ENCODE measurements at regions of chr17 and their contacts with region 1.

Region 1: GRCh38 chr17:45098869-45099616 is 33.3 kb downstream of the PLCD3 start:
- DNase-seq: peak; percentile 85
- H3K4me3 Mint-ChIP-seq: no peak overlapping the region
- H3K27ac Mint-ChIP-seq: peak overlapping the region; percentile 86
- H3K4me1 Mint-ChIP-seq: peaks cover 33% of the 10 kb centered on the region
- H3K27me3 Mint-ChIP-seq: no peaks in the 10 kb centered on the region
- CTCF ChIP-seq: peak; percentile 93

Region 2: DNA sequence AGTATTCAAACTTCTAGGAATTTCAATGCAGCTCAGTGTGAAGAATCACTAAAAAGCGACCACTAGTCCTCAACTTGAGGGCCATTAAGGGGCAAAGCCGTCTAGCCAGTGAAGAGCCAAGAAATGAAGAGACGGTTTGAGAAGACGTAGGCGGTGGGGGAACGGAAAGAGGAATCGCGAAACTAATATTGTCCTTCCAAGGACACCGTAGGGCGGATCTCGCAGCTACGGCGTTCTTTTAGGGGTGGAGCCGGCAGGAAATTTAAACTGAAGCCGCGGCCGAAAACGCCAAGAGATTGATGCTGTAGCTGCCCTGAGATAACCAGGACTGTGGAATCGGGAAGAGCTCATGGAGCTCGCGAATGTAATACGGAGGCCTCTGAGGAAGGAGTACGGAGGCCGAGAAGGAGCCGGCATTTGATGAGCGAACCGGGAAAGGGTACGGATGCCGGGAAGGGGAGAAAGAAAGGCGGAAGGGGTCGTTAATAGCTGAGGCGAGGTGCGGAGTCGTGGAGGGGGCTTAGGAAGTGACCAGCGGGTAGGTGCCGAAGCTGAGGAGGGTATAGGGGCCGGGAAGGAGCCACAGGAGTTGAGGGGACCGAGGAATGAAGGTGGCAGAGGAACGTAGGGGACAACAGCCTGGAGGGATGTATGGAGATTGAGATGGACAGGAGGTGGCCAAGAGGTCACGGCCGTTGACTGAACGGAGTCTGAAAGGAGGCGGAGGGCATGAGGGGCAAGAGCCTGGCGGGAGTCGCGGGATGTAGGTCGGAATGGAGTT is 390.5 kb before region 1 on chr17 and contains the start of gene DBF4B:
- CTCF ChIA-PET with region 1: no interaction called
- POLR2A ChIA-PET with region 1: no interaction called
- intact Hi-C with region 1: no loop called
- DNase-seq: peak; percentile 88
- H3K4me3 Mint-ChIP-seq: no peak within 1 kb of the TSS
- H3K27ac Mint-ChIP-seq: no peak within 1 kb of the TSS
- H3K4me1 Mint-ChIP-seq: peaks cover 5% of the 10 kb centered on the region
- H3K27me3 Mint-ChIP-seq: no peaks in the 10 kb centered on the region
- CTCF ChIP-seq: no peak
- total RNA-seq, gene DBF4B: 13.9 TPM in 2 replicates

Region 3: DNA sequence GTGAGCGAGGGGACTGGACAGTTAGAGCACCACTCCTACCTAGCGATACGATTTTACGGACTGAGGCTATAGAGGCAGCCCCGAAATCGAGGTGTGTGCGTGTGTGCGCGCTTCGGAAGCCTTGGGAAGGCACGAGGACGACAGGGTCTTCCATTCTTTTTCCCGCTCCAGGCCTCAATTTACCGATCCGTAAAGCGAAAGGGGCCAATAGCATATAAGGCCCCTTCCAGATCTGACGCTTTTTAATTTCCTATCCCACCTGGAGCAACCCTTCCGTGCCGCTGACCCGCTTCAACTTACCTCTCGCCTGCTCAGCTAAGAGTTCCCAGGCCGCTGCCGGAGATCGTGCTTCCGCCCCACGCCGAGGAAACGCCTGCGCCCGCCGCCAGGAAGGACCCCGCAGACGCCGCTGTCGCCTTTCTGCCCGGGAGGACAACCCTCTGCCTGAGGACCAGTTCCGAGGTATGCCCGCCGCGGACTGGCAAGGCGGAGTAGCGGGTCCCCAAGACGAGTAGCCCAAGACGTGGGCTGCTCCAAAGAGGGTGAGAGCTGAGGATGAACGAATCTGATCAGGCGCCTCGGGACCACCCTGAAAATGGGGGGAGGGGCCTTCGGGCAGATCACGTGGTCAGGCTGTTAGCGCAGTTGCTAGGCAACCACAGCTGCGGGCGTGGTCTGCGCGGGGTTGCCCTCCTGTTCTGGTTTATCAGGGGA is 199.8 kb before region 1 on chr17 and contains the start of gene EFTUD2:
- CTCF ChIA-PET with region 1: interaction called, 10 read pairs
- POLR2A ChIA-PET with region 1: interaction called, 6 read pairs
- intact Hi-C with region 1: loop called (anchors 10 kb)
- DNase-seq: peak; percentile 87
- H3K4me3 Mint-ChIP-seq: peak within 1 kb of the TSS; percentile 80
- H3K27ac Mint-ChIP-seq: peak within 1 kb of the TSS; percentile 99
- H3K4me1 Mint-ChIP-seq: peaks cover 21% of the 10 kb centered on the region
- H3K27me3 Mint-ChIP-seq: no peaks in the 10 kb centered on the region
- CTCF ChIP-seq: no peak
- total RNA-seq, gene EFTUD2: 119 and 125 TPM in 2 replicates

Region 4: DNA sequence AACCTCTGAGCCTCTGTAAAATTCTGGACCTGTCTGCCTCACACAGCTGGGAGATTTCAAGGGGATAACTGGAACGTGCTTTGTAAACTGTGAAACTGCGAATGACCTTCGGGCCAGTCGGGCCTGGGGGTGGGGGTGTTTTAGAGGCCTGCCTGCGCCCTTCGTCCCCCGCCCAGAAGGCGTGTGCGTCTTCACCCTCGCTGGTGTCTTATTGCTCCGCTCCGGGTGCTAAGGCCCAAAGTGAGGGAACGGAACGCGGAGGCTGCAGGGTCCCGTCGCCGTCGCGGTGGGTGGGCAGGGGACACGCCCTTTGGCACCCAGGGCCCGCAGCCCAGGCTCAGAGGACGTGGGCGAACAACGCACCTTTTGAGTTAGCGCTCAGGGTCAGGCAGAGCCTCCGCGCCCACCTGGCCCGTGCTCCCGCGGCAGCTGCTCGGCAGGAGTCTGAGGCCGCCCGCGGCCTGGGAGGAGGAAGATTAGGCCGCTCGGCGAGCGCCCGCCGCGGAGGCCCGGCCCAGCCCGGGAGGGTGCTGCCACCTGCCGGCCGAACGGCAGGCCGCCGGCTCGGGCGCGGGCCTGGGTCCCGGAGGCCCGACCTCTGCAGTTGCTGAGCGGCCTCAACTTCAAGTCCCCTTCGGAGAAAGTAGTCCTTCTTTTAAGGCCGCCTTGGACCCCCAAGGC is 77.3 kb before region 1 on chr17:
- CTCF ChIA-PET with region 1: interaction called, 67 read pairs
- POLR2A ChIA-PET with region 1: interaction called, 4 read pairs
- intact Hi-C with region 1: loop called (anchors 1 kb)
- DNase-seq: peak; percentile 56
- H3K4me3 Mint-ChIP-seq: no peak overlapping the region
- H3K27ac Mint-ChIP-seq: no peak overlapping the region
- H3K4me1 Mint-ChIP-seq: peaks cover 18% of the 10 kb centered on the region
- H3K27me3 Mint-ChIP-seq: no peaks in the 10 kb centered on the region
- CTCF ChIP-seq: peak; percentile 80

Region 5: DNA sequence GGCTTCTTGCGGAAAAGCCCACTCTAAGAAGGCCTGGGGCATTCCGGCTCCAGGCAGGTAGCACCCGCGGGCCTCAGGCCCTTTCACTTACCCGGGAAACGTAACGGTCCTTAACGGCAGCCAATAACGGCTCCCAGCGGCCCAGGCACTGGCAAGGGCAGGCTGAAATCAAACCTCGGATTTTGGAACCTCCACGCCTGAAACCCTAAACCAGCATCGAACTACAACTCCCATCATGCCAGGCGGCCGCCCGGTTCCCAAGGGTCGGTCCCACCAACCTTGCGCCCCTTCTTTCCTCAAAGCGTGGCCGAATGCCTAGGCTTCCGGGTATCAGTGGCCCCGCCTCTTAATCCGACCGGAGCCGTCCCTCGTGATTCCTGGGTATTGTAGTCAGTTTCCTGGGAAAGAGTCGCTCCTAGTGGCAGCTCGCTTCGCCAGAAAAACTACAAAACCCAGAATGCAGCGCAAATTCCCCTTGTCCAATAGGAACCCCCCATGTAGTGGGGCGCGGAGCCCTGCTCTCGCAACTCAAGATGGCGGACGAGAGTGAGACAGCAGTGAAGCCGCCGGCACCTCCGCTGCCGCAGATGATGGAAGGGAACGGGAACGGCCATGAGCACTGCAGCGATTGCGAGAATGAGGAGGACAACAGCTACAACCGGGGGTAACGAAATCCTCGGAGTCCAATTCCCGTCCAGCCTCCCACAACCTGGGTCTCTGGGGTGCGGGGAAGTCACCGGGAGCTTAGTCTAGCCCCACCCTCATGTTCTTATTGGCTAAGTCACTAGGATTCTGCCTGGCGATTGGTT is 38.0 kb before region 1 on chr17 and contains the start of gene NMT1:
- CTCF ChIA-PET with region 1: interaction called, 8 read pairs
- POLR2A ChIA-PET with region 1: interaction called, 54 read pairs
- intact Hi-C with region 1: no loop called
- DNase-seq: peak; percentile 100
- H3K4me3 Mint-ChIP-seq: peak within 1 kb of the TSS; percentile 84
- H3K27ac Mint-ChIP-seq: peak within 1 kb of the TSS; percentile 94
- H3K4me1 Mint-ChIP-seq: peaks cover 5% of the 10 kb centered on the region
- H3K27me3 Mint-ChIP-seq: no peaks in the 10 kb centered on the region
- CTCF ChIP-seq: no peak
- total RNA-seq, gene NMT1: 85.3 and 89.7 TPM in 2 replicates

Region 6: GRCh38 chr17:45087504-45087975 is 11.5 kb before region 1 on chr17:
- CTCF ChIA-PET with region 1: interaction called, 17 read pairs
- POLR2A ChIA-PET with region 1: interaction called, 16 read pairs
- intact Hi-C with region 1: no loop called
- DNase-seq: no peak
- H3K4me3 Mint-ChIP-seq: no peak overlapping the region
- H3K27ac Mint-ChIP-seq: peak overlapping the region; percentile 12
- H3K4me1 Mint-ChIP-seq: peaks cover 8% of the 10 kb centered on the region
- H3K27me3 Mint-ChIP-seq: no peaks in the 10 kb centered on the region
- CTCF ChIP-seq: no peak

Region 7: DNA sequence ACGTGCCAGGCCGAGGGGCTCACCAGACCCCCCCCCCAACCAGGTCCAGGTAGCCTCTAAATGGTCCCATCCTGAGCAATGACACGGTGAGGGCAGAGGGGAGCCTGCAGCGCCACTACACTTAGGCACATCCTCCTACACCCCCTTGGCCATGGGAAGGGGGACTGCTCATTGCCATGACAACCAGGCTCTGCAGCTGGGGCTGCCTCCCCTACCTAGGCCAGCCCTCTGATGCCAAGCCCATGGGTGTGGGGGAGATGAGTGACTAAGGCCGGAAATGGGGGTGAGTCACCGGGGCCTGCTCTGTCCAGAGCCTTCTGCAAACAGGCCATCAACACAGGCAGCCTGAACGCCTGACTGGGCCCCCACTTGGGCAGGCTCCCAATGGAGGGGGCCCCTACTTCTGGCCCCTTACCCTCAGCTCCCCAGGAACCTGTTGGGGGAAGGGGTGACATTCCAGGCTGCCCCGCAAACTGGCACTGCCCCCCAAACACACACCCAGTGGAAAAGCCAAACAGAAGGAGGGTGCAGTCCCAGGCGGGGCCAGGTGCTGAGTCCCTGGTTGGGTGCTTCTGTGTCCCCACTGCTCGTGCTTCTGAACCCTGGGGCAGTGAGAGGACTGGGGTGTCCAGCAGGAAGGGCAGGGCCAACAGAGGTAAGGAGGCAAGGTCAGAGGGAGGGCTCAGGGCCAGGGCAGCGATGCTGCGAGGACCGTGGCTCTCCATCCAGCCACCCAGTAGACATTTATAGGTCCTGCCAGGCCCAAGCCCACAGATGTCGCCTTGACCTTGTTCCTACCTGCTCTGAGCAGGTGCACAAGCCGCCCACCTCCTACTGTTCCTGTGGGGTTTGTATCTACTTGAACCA is 25.1 kb after region 1 on chr17:
- CTCF ChIA-PET with region 1: interaction called, 14 read pairs
- POLR2A ChIA-PET with region 1: interaction called, 12 read pairs
- intact Hi-C with region 1: loop called (anchors 2 kb)
- DNase-seq: peak; percentile 89
- H3K4me3 Mint-ChIP-seq: peak overlapping the region; percentile 35
- H3K27ac Mint-ChIP-seq: peak overlapping the region; percentile 91
- H3K4me1 Mint-ChIP-seq: peaks cover 42% of the 10 kb centered on the region
- H3K27me3 Mint-ChIP-seq: no peaks in the 10 kb centered on the region
- CTCF ChIP-seq: no peak

Region 8: DNA sequence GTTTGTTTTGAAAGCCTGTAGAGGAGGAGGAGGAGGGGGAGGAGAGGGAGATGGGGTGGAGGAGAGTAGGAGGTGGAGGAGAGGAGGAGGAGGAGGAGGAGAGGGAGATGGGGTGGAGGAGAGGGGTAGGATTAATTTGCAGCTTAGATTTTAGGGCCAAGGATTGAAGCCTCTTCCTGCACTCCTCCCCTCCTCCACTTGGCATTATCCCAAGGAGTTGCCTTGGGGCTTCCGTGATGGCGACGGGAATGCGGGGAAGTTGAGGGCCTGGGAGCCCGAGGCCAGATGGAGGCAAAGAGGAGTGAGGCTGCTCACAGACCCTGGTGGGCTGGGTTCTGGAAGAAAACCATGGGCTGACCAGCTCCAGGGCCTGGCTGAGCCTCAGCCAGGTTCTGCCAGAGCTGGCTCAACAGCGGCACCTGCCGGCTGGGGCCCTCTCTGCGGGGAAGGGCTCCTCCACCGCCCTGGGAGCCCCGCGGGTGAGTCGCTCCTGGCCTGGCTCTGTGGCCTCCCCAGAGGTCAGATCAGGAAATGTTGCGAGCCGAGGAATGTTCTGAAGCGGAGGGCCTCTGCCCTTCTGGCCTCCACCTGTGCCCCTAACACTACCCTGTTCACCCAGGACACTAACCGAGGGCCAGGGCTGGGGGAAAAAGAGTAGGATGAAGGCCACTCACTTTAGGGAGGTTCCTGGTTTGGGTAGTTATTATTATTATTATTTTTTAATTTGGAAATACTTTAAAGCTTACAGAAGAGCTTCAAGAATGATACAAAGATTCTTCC is 98.7 kb after region 1 on chr17:
- CTCF ChIA-PET with region 1: interaction called, 10 read pairs
- POLR2A ChIA-PET with region 1: interaction called, 4 read pairs
- intact Hi-C with region 1: no loop called
- DNase-seq: peak; percentile 91
- H3K4me3 Mint-ChIP-seq: no peak overlapping the region
- H3K27ac Mint-ChIP-seq: peak overlapping the region; percentile 19
- H3K4me1 Mint-ChIP-seq: peaks cover 10% of the 10 kb centered on the region
- H3K27me3 Mint-ChIP-seq: no peaks in the 10 kb centered on the region
- CTCF ChIP-seq: peak; percentile 99

Measured in MCF 10A (cell line).